Dendritic cell treated with granulocyte-macrophage colony-stimulating factor and Interleukin-4, amounts not matched to agents 40 ng/mL and 50 ng/mL, for 4 days (primary cell): ENCODE measurements at regions of chr6 and their contacts with region 1.

Region 1: GRCh38 chr6:148250975-148251685 is 91.5 kb upstream of the SASH1 start:
- H3K4me3 Mint-ChIP-seq: no peak overlapping the region
- H3K27ac Mint-ChIP-seq: no peak overlapping the region
- H3K4me1 Mint-ChIP-seq: no peaks in the 10 kb centered on the region
- H3K27me3 Mint-ChIP-seq: peaks cover 7% of the 10 kb centered on the region

Region 2: DNA sequence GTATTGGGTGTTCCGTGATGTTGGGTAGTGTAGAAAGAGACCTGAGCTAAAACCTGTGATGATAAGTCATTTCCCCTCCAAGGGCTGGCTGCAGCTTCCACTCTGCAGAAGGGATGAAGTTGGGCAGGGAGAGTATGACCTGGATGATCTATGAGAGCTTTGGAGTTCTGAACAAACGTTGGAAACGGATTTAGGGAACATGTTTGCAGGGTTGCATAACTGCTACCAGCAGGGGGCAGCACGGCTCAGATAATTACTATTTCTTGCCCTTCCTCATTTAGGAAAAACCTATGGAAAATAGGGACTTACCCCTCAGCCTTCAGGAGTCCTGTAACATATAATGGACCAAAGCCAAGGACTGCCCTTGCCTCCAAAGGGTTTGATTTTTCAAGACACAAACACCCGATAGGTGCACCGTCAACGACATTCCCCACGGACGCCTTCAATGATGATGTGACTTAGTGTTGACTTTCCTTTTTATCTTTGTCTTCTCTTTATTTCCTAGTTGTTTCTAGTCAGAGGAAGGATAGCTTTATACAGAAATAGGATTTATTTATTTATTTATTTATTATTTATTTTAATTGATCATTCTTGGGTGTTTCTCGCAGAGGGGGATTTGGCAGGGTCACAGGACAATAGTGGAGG is 73.4 kb before region 1 on chr6:
- intact Hi-C with region 1: loop called (anchors 1 kb)
- H3K4me3 Mint-ChIP-seq: no peak overlapping the region
- H3K27ac Mint-ChIP-seq: no peak overlapping the region
- H3K4me1 Mint-ChIP-seq: peaks cover 5% of the 10 kb centered on the region
- H3K27me3 Mint-ChIP-seq: peaks cover 12% of the 10 kb centered on the region

Region 3: GRCh38 chr6:148657048-148657447 is 405.9 kb after region 1 on chr6:
- intact Hi-C with region 1: no loop called
- H3K4me3 Mint-ChIP-seq: no peak overlapping the region
- H3K27ac Mint-ChIP-seq: peak overlapping the region; percentile 32
- H3K4me1 Mint-ChIP-seq: peaks cover 14% of the 10 kb centered on the region
- H3K27me3 Mint-ChIP-seq: no peaks in the 10 kb centered on the region